B cell (primary cell): ENCODE measurements at regions of chr4 and their contacts with region 1.

Region 1: DNA sequence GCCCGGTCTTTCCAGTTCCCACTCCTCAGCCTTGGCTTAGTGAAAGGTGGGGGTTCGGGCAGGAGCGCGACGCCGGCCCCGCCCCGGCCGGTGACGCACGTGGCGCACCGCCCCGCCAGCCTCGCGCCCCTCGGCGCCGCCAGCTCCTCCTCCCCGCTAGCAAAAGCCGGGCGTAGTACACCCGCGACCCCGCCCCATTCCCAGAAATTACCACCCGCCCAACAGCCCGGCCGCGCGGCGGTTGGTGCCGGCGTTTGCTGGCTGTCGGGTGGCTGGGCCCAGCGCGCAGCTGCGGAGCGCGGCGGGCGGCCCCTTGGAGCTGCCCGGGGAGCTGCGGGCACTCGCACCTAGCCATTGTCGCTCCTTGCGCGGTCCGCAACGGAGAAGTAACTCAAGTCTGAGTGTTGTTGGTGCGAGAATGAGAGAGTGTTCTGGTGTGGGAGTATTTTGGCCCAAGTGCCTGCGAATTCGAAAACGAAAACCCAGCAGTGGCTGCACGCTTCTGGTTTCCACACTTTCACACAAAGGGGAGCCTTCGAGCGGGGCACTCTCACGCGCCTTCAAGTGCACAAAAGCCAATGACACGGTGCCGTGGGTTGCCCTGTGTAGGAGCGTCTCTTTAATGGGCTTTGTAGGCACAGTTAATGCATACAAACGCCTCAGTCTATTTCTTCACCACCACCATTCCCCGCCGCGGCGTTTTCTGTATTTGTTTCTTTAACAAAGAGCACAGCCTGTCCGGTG is 1.0 kb upstream of the ELF2 start:
- DNase-seq: peak; percentile 94
- ATAC-seq: peak; percentile 75
- H3K4me3 ChIP-seq: peak overlapping the region; percentile 47 to 89 (median 79)
- H3K4me3 Mint-ChIP-seq: peak overlapping the region; percentile 95
- H3K27ac ChIP-seq: peak overlapping the region; percentile 87 to 95
- H3K27ac Mint-ChIP-seq: peak overlapping the region; percentile 94
- H3K4me1 ChIP-seq: peaks cover 12 to 15% of the 10 kb centered on the region in 2 donors
- H3K4me1 Mint-ChIP-seq: peaks cover 23% of the 10 kb centered on the region
- H3K27me3 ChIP-seq: no peaks in the 10 kb centered on the region
- H3K27me3 Mint-ChIP-seq: no peaks in the 10 kb centered on the region
- CTCF ChIP-seq: no peak

Region 2: DNA sequence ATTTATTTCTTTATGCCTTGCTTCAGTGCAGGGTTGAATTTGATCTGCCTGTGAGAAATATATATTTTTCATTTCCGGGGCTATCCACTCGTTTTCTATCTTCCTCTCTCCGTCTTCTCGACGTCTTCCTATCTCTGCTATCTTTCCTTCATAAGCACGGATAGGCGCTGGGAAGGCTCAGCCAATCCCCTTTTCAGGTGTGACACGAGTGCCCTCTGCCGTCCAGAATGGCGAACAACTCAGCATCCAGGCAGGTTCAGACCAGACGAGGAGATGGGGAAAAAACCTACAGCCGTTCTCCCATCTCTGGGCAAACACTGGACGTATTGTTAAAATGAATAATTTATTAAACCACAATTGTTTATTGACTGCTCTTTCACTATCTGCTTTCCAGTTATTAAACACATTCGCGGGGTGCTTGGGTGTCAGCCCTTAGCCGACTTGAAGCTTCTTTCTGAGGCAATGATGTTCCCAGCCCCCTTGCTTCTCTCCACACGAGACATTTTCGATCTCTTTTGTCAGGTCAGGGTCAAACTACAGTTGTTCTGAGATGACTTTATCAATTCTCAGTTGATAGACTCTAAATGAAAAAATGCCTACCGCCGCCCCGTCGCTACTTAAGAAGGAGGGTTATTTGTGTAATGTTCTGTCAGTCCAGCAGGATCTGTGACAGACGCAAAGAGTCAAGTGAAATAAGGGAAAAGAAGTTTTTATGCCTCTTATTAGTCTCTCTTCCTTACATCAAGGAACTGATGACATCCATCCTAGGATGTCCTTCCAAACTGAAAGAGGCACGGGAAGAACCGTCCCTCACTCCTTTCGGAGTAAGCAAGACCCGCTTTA is 258.7 kb before region 1 on chr4:
- CTCF ChIA-PET with region 1: no interaction called
- POLR2A ChIA-PET with region 1: no interaction called
- intact Hi-C with region 1: no loop called
- DNase-seq: peak; percentile 47
- ATAC-seq: peak; percentile 53
- H3K4me3 ChIP-seq: no peak overlapping the region
- H3K4me3 Mint-ChIP-seq: no peak overlapping the region
- H3K27ac ChIP-seq: no peak overlapping the region
- H3K27ac Mint-ChIP-seq: no peak overlapping the region
- H3K4me1 ChIP-seq: peaks cover 6 to 7% of the 10 kb centered on the region in 2 donors
- H3K4me1 Mint-ChIP-seq: peaks cover 14% of the 10 kb centered on the region
- H3K27me3 ChIP-seq: peaks cover 0 to 8% (median 0%) of the 10 kb centered on the region in 4 experiments
- H3K27me3 Mint-ChIP-seq: peaks cover 21% of the 10 kb centered on the region
- CTCF ChIP-seq: peak; percentile 66

Region 3: GRCh38 chr4:139015269-139015947 is 162.6 kb before region 1 on chr4 and contains the start of gene NOCT:
- CTCF ChIA-PET with region 1: no interaction called
- POLR2A ChIA-PET with region 1: no interaction called
- intact Hi-C with region 1: loop called (anchors 1 kb)
- DNase-seq: peak; percentile 97
- ATAC-seq: peak; percentile 92
- H3K4me3 ChIP-seq: peak within 1 kb of the TSS; percentile 56 to 86 (median 78)
- H3K4me3 Mint-ChIP-seq: peak within 1 kb of the TSS; percentile 92
- H3K27ac ChIP-seq: peak within 1 kb of the TSS; percentile 88 to 98
- H3K27ac Mint-ChIP-seq: peak within 1 kb of the TSS; percentile 98
- H3K4me1 ChIP-seq: peaks cover 14 to 18% of the 10 kb centered on the region in 2 donors
- H3K4me1 Mint-ChIP-seq: peaks cover 28% of the 10 kb centered on the region
- H3K27me3 ChIP-seq: no peaks in the 10 kb centered on the region
- H3K27me3 Mint-ChIP-seq: no peaks in the 10 kb centered on the region
- CTCF ChIP-seq: no peak
- total RNA-seq, gene NOCT: 2.6 and 3.0 TPM in 2 replicates

Region 4: DNA sequence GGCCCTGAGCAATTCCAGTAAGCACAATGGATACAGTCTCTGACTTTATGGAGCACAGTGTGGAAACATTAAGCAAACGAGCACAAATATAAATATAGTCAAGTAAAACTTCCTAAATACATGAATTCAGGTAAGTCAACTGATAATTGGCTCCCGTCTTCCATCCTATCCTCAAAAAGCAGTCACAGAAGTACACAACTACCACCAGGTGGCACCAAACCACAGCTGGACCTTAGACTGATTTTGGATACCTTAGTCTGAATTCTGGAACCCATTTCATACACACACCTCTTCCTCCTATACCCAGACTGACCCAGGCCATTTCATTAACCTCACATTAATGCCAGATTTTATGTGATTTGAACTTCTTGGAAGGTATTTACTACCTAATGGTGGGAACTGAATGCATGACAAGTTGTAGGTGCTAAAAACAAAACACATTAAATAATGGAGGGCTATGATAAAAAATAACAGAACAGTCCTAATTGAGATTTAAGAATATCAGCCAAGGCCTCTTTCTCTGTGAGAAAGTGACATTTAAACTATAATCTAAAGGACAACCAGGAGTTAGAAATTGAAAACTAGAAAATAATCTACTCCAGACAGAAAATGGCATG is 78.6 kb before region 1 on chr4:
- CTCF ChIA-PET with region 1: interaction called, 3 read pairs
- POLR2A ChIA-PET with region 1: interaction called, 7 read pairs
- intact Hi-C with region 1: loop called (anchors 1 kb)
- DNase-seq: peak; percentile 87
- ATAC-seq: peak; percentile 75
- H3K4me3 ChIP-seq: no peak overlapping the region
- H3K4me3 Mint-ChIP-seq: no peak overlapping the region
- H3K27ac ChIP-seq: no peak overlapping the region
- H3K27ac Mint-ChIP-seq: no peak overlapping the region
- H3K4me1 ChIP-seq: no peaks in the 10 kb centered on the region
- H3K4me1 Mint-ChIP-seq: peaks cover 2% of the 10 kb centered on the region
- H3K27me3 ChIP-seq: no peaks in the 10 kb centered on the region
- H3K27me3 Mint-ChIP-seq: no peaks in the 10 kb centered on the region
- CTCF ChIP-seq: peak; percentile 89

Region 5: GRCh38 chr4:139229534-139230039 is 51.5 kb after region 1 on chr4:
- CTCF ChIA-PET with region 1: interaction called, 9 read pairs
- POLR2A ChIA-PET with region 1: no interaction called
- intact Hi-C with region 1: loop called (anchors 5 kb)
- DNase-seq: peak; percentile 66
- ATAC-seq: peak; percentile 64
- H3K4me3 ChIP-seq: no peak overlapping the region
- H3K4me3 Mint-ChIP-seq: no peak overlapping the region
- H3K27ac ChIP-seq: no peak overlapping the region
- H3K27ac Mint-ChIP-seq: no peak overlapping the region
- H3K4me1 ChIP-seq: no peaks in the 10 kb centered on the region
- H3K4me1 Mint-ChIP-seq: peaks cover 1% of the 10 kb centered on the region
- H3K27me3 ChIP-seq: no peaks in the 10 kb centered on the region
- H3K27me3 Mint-ChIP-seq: no peaks in the 10 kb centered on the region
- CTCF ChIP-seq: peak; percentile 81

Region 6: DNA sequence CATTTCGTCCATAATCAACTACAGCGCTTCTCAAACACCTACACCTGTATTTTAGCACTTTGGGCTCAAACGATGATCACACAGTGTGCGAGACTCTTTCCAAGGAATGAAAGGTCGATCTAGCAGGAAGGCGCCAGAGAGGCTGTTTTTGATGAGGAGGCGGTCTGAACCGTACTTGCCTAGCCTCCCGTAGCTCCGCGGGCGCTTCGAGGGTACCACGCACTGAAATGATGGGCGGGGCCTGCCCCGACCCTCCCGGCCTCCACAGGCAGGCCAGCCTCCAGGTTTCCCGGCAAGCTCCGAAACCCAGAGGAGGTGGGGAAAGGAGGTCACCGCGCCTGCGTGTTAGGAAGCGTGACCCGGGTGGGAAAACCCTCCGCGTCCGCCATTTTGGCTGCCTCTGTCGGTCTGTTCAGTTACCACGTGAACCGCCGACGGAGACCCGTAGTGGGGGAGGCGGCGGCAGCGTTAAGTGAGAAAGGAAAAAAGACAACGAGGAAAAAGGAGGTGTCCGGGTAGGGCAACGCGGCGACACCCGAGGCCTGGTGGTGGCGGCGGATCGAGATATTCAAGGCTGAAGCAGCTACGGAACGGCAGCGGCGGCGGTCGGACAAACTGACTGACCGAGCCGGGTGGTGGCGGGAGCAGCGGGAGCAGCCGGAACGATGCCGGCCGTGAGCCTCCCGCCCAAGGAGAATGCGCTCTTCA is 123.2 kb after region 1 on chr4 and contains the start of gene NAA15:
- CTCF ChIA-PET with region 1: interaction called, 20 read pairs
- POLR2A ChIA-PET with region 1: interaction called, 28 read pairs
- intact Hi-C with region 1: loop called (anchors 1 kb)
- DNase-seq: peak; percentile 98
- ATAC-seq: peak; percentile 89
- H3K4me3 ChIP-seq: peak within 1 kb of the TSS; percentile 75 to 98 (median 94)
- H3K4me3 Mint-ChIP-seq: peak within 1 kb of the TSS; percentile 99
- H3K27ac ChIP-seq: peak within 1 kb of the TSS; percentile 91 to 96
- H3K27ac Mint-ChIP-seq: peak within 1 kb of the TSS; percentile 99
- H3K4me1 ChIP-seq: peaks cover 22 to 23% of the 10 kb centered on the region in 2 donors
- H3K4me1 Mint-ChIP-seq: peaks cover 45% of the 10 kb centered on the region
- H3K27me3 ChIP-seq: no peaks in the 10 kb centered on the region
- H3K27me3 Mint-ChIP-seq: no peaks in the 10 kb centered on the region
- CTCF ChIP-seq: no peak
- total RNA-seq, gene NAA15: 56.7 and 59.5 TPM in 2 replicates

Region 7: DNA sequence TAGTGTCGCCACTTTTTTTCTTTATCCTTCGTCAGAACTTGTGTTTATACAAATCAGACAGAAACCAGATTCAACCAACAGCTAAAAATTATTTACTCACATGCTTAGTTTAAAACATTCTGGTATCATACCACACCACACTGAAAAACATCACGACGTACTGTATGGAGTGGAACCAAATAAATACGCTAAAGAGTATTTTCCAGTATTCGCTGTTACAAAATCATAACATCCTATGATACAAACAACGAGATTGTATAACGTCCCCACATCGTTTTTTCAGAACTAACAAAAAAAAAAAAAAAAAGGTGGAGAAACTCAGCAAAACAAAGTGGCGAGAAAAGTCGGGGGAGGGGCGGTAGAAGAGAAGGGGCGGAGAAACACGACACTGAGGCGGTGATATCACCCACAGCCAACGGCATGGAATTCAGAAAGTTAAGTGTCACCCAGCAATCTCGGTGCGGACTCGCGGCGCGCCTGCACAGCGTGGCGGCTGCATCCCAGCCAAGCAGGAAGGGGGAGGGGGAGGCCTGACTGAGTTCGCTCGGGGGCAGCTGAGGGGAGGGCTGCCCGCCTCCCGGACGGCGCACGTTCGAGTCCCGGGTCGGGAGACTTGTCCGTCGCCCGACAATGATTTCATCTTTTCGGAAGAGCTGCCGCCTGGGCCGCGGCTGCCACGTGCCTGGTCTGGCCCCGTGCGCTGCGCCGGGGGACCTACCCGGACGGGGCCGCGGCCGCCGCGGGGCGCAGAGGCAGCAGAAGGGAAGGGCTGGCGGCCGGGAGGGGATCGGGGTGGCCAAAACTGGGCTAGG is 377.1 kb after region 1 on chr4:
- CTCF ChIA-PET with region 1: interaction called, 3 read pairs
- POLR2A ChIA-PET with region 1: no interaction called
- intact Hi-C with region 1: loop called (anchors 5 kb)
- DNase-seq: peak; percentile 91
- ATAC-seq: peak; percentile 60
- H3K4me3 ChIP-seq: peak overlapping the region; percentile 73 to 96 (median 89)
- H3K4me3 Mint-ChIP-seq: peak overlapping the region; percentile 100
- H3K27ac ChIP-seq: peak overlapping the region; percentile 93 to 98
- H3K27ac Mint-ChIP-seq: peak overlapping the region; percentile 100
- H3K4me1 ChIP-seq: peaks cover 29 to 31% of the 10 kb centered on the region in 2 donors
- H3K4me1 Mint-ChIP-seq: peaks cover 63% of the 10 kb centered on the region
- H3K27me3 ChIP-seq: no peaks in the 10 kb centered on the region
- H3K27me3 Mint-ChIP-seq: no peaks in the 10 kb centered on the region
- CTCF ChIP-seq: no peak

Region 8: GRCh38 chr4:140807491-140808252 is 1629.6 kb after region 1 on chr4:
- CTCF ChIA-PET with region 1: no interaction called
- POLR2A ChIA-PET with region 1: no interaction called
- intact Hi-C with region 1: loop called (anchors 5 kb)
- DNase-seq: peak; percentile 80
- ATAC-seq: peak; percentile 84
- H3K4me3 ChIP-seq: peak overlapping the region in 2 of 5 experiments; percentile 10 to 50
- H3K4me3 Mint-ChIP-seq: peak overlapping the region; percentile 70
- H3K27ac ChIP-seq: peak overlapping the region; percentile 82 to 83
- H3K27ac Mint-ChIP-seq: peak overlapping the region; percentile 97
- H3K4me1 ChIP-seq: peaks cover 85 to 92% of the 10 kb centered on the region in 2 donors
- H3K4me1 Mint-ChIP-seq: peaks cover 83% of the 10 kb centered on the region
- H3K27me3 ChIP-seq: no peaks in the 10 kb centered on the region
- H3K27me3 Mint-ChIP-seq: no peaks in the 10 kb centered on the region
- CTCF ChIP-seq: no peak